ENCODE measurements at regions of chr9 and their contacts with region 1.

Region 1: DNA sequence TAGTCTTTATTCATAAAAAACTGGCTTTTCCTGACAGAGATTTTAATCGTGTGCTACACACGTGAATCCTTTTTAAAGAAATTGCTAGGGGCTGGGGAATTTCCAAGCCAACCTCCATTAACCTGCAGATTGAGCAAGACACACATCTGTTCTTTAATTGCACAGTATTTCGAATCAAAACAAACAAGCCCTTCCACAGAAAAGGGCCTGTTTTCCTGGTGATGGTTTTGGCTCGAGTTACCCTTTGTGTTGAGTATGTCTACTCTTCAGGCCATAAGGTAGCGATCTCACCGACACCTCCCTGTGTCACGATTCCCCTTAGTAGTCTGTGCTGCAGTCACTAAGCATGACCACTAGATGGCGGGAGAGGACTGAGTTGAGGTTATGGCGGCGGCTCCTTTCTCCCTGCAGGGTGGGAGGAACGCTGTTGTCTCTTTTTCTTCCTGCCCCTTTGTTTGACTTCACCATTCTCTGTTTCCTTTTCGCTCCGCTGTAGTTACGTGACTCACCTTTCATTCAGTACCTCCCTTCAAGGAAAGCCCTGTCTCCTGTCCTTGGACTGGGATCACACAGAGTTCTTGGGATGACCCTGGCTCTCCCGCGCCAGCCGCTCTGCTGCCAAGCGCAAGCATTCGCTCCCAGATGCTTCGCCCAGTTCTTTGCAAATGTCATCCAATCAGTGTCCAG is 137.1 kb upstream of the SLC24A2 start:
- DNase-seq: peak; percentile 73
- H3K4me3 ChIP-seq: peak overlapping the region; percentile 44
- H3K27ac ChIP-seq: no peak overlapping the region
- H3K4me1 ChIP-seq: peaks cover 4% of the 10 kb centered on the region
- H3K27me3 ChIP-seq: no peaks in the 10 kb centered on the region
- CTCF ChIP-seq: peak; percentile 76

Region 2: GRCh38 chr9:19471737-19472648 is 454.0 kb before region 1 on chr9:
- CTCF ChIA-PET with region 1: interaction called, 6 read pairs
- POLR2A ChIA-PET with region 1: no interaction called
- intact Hi-C with region 1: loop called (anchors 1 kb)
- DNase-seq: peak; percentile 46
- H3K4me3 ChIP-seq: no peak overlapping the region
- H3K27ac ChIP-seq: no peak overlapping the region
- H3K4me1 ChIP-seq: no peaks in the 10 kb centered on the region
- H3K27me3 ChIP-seq: no peaks in the 10 kb centered on the region
- CTCF ChIP-seq: peak; percentile 64

Region 3: DNA sequence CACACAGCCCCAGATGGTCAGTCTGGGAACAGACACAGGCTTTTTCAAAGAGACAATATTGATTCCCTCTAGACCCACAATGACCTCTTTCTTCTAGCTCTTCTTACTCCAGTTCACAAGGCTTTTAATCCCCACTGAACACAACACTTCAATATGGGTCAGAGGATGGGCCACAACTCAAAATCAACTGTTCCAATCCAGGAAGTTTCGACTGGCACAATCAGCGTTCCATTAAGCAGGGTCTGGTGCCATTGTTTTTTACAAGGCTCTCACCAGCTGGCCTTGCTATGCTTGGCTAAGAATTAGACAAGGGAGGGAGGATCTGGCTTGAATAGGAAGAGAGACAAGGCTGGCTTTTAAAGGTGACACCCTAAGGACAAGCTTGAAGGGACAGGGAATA is 62.3 kb after region 1 on chr9:
- CTCF ChIA-PET with region 1: no interaction called
- POLR2A ChIA-PET with region 1: no interaction called
- intact Hi-C with region 1: no loop called
- DNase-seq: no peak
- H3K4me3 ChIP-seq: no peak overlapping the region
- H3K27ac ChIP-seq: no peak overlapping the region
- H3K4me1 ChIP-seq: no peaks in the 10 kb centered on the region
- H3K27me3 ChIP-seq: no peaks in the 10 kb centered on the region
- CTCF ChIP-seq: no peak

Region 4: GRCh38 chr9:20065796-20066700 is 140.1 kb after region 1 on chr9:
- CTCF ChIA-PET with region 1: no interaction called
- POLR2A ChIA-PET with region 1: no interaction called
- intact Hi-C with region 1: no loop called
- DNase-seq: peak; percentile 89
- H3K4me3 ChIP-seq: no peak overlapping the region
- H3K27ac ChIP-seq: peak overlapping the region; percentile 69
- H3K4me1 ChIP-seq: peaks cover 24% of the 10 kb centered on the region
- H3K27me3 ChIP-seq: no peaks in the 10 kb centered on the region
- CTCF ChIP-seq: no peak

Region 5: DNA sequence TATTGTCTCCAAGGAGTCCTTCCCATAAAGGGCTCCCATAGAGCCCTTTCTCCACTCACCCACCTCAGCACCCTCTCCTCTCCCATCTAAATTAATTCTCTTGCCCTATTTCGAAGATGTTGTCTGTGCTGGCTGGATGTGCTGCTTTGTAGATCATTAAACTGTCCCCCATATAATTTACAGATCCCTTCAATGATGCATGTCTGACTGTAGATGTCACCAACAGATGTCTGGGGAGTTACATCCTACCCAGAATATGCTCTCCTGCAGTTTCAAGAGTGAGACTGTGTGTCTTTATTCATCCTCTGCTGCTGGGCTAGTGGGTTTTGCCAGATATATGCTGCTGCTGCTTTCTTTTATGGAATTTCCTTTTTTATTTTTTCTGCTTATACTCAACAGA is 345.1 kb after region 1 on chr9:
- CTCF ChIA-PET with region 1: no interaction called
- POLR2A ChIA-PET with region 1: no interaction called
- intact Hi-C with region 1: loop called (anchors 10 kb)
- DNase-seq: peak; percentile 23
- H3K4me3 ChIP-seq: no peak overlapping the region
- H3K27ac ChIP-seq: no peak overlapping the region
- H3K4me1 ChIP-seq: no peaks in the 10 kb centered on the region
- H3K27me3 ChIP-seq: no peaks in the 10 kb centered on the region
- CTCF ChIP-seq: no peak

Region 6: DNA sequence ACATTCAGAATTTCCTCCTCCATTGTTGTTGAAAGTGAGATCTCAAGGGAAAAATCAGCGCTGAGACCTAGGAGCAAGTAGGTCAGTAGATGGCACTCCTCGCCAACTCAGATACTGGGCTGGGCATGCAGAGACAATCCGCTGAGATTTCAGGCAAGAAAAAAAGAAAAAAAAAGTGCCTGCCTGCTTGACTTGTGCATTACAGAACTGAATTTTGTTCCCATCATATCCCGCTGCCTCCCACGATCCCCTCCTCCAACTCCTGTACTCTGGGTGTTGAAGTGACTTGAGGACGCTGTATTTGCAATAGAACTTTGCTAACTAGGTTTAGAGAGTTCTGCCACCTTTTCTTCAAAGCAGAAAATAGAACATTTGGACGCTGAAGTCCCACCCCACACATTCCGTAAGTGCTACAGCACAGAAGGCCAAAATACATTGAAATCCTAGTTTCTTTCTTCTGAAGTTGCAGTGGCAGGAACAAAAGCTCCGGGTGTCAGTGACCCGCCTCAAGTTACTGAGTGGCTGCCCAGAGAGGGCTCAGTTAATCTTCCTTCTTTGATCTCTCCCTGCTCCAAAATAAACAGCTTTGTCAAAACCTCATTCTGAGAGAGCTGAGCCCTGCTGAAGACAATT is 430.6 kb after region 1 on chr9:
- CTCF ChIA-PET with region 1: no interaction called
- POLR2A ChIA-PET with region 1: no interaction called
- intact Hi-C with region 1: loop called (anchors 5 kb)
- DNase-seq: peak; percentile 84
- H3K4me3 ChIP-seq: no peak overlapping the region
- H3K27ac ChIP-seq: peak overlapping the region; percentile 53
- H3K4me1 ChIP-seq: peaks cover 52% of the 10 kb centered on the region
- H3K27me3 ChIP-seq: no peaks in the 10 kb centered on the region
- CTCF ChIP-seq: peak; percentile 68

Region 7: DNA sequence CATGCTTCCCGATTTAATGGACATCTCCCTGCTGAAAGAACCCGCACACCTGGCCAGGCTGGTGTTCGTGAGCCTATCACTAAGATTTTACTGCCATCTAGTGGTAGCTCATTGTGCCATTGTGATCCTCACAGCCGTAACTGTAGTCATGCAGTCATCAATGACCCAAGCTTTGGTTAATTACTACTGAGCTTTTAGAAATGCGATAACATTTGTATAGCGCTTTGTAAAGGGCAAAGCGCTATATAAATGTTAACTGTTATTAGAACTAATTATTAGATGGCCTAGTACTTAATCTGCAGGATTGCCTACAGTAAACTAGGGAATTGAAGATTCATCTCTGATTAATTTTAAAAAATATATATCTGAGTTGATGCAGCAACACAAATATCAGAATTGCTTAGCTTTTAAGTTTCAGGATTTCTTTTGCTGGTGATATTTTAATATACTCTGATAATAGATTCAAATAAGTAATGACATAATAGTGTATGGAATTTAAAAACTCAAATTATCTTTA is 1015.3 kb after region 1 on chr9:
- CTCF ChIA-PET with region 1: no interaction called
- POLR2A ChIA-PET with region 1: no interaction called
- intact Hi-C with region 1: loop called (anchors 5 kb)
- DNase-seq: peak; percentile 66
- H3K4me3 ChIP-seq: no peak overlapping the region
- H3K27ac ChIP-seq: no peak overlapping the region
- H3K4me1 ChIP-seq: peaks cover 4% of the 10 kb centered on the region
- H3K27me3 ChIP-seq: no peaks in the 10 kb centered on the region
- CTCF ChIP-seq: peak; percentile 72